ENCODE measurements at regions of chr1 and their contacts with region 1.

Region 1: GRCh38 chr1:165367375-165367993 is 11.0 kb upstream of the LMX1A start:
- DNase-seq: peak; percentile 83
- ATAC-seq: peak; percentile 58 to 59

Region 2: GRCh38 chr1:165050235-165050634 is 317.2 kb before region 1 on chr1:
- intact Hi-C with region 1: no loop called
- DNase-seq: no peak
- ATAC-seq: no peak

Region 3: DNA sequence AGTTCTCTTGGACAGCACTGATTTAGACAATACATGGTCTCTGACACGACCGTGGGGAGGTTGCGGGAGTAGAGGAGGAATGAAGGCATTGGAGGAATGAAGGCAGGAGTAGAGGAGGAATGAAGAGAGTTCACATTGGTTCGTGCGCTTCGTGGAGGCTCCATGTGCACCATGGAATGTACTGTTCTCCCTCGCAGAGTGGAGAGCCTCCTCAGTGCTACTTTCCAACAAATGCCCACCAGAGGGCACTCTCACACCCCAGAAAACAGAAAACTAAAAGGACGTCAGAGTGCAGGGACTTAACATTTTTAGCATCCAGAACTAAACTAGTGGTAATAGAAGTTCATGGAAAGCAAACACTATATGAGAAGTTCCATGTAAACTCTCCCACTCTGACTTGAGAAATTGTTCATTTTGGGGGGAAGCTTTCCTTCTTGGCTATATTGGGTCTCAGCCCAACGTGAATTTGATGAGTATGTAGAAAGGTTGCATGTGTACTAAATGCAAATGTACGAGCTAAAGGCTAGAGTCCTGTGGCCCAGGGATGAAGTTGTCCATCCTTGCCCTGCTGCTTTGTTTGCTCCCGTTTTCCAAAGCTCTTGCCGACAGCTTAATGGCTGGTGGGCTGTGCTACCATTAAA is 222.6 kb before region 1 on chr1:
- intact Hi-C with region 1: loop called (anchors 5 kb)
- DNase-seq: peak; percentile 36
- ATAC-seq: peak; percentile 55 to 87

Region 4: GRCh38 chr1:165467706-165468105 is 100.2 kb after region 1 on chr1:
- intact Hi-C with region 1: no loop called
- DNase-seq: no peak
- ATAC-seq: peak; percentile 27 to 65

Measured in left cardiac atrium (tissue), 4 donors.